ENCODE measurements at regions of chr2 and their contacts with region 1.

Region 1: GRCh38 chr2:176638167-176639015 is 369.1 kb downstream of the MTX2 start:
- DNase-seq: peak; percentile 78
- ATAC-seq: peak; percentile 61
- H3K4me3 ChIP-seq: peak overlapping the region; percentile 71
- H3K27ac ChIP-seq: peak overlapping the region; percentile 76
- H3K4me1 ChIP-seq: peaks cover 41% of the 10 kb centered on the region
- H3K27me3 ChIP-seq: no peaks in the 10 kb centered on the region
- CTCF ChIP-seq: peak; percentile 86

Region 2: DNA sequence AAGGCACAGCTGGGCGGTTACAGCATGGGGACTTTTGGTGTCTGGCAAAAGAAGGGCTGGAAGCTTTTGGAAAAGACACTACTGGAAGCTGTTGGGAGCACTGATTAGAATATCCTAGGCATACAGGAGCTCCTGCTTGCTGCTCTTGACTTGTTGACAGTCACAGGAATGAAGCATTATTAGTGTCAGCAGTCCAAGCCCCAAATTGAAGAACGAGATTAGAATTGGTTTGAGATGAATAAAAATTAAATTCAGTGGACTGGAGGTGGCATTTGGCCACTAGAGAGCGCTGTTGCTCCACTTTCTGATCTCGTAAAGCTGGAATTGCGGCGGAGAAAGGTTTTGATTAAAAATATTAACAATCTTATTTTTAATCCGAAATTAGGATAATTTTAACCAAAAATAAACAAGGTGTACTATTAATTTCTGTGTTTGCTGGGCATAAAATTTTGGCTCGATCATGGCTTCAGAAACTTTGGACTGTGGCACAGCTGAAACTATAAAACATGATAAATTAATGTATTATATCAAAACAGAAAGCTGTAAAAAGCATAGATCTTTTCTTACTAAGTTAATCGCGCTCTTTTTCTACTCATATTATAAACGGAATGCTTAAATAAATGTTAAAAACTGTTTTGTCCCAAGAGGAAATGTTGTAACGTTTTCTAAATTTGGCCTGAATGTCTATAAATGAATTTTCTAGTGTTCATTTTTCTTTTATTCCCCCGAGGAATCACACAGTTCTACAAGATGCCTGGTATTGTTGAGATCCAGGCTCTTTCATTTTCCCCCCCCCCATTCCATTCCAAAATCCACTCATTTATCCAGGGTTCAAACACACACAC is 511.2 kb before region 1 on chr2:
- CTCF ChIA-PET with region 1: interaction called, 3 read pairs
- POLR2A ChIA-PET with region 1: no interaction called
- intact Hi-C with region 1: loop called (anchors 2 kb)
- DNase-seq: peak; percentile 78
- ATAC-seq: 0 out of 2 replicates have a peak, but pooled peaks have one; percentile 14
- H3K4me3 ChIP-seq: peak overlapping the region; percentile 62
- H3K27ac ChIP-seq: no peak overlapping the region
- H3K4me1 ChIP-seq: peaks cover 10% of the 10 kb centered on the region
- H3K27me3 ChIP-seq: no peaks in the 10 kb centered on the region
- CTCF ChIP-seq: peak; percentile 93

Region 3: DNA sequence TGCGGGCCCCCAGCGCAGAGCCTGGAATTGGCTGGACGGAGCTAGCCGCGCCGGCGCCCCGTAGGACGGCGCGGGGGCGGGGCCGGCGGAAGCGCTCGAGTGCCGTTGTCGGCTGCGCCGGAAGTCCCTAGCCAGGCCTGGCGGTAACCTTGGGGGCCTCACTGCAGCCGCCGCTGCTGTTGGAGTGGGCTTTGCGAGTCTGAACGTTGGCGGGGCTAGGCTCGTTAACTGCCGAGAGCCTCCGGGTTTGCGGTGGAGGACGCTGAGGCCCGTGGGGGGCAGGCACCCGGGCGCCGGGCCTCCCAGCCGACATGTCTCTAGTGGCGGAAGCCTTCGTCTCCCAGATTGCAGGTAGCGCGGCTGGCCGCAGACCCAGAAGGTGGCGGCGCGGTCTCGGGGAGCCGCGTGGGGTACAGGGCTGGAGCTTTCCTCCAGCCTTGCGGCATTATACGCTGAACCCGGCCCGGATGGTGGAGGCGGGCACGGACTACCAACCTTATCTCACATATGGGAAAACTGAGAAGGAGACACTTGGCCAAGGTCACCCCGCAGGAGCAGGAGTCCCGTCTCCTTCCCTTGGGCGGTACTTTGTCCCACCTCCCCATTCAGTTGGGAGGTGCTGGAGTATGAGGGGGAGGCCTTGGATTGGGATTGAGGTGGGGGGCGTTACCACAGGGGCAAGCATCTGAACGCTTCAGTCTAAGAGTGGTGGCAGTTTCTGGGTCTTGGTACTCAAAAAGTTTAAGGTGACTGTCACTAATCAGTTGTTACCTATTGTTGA is 368.9 kb before region 1 on chr2 and contains the start of gene MTX2:
- CTCF ChIA-PET with region 1: no interaction called
- POLR2A ChIA-PET with region 1: no interaction called
- intact Hi-C with region 1: loop called (anchors 2 kb)
- DNase-seq: peak; percentile 76
- ATAC-seq: peak; percentile 94
- H3K4me3 ChIP-seq: peak within 1 kb of the TSS; percentile 94
- H3K27ac ChIP-seq: peak within 1 kb of the TSS; percentile 66
- H3K4me1 ChIP-seq: peaks cover 6% of the 10 kb centered on the region; the same call in 1 of the 2 replicates
- H3K27me3 ChIP-seq: no peaks in the 10 kb centered on the region
- CTCF ChIP-seq: no peak
- total RNA-seq, gene MTX2: 33.3 and 54.5 TPM in 2 replicates

Region 4: GRCh38 chr2:176317199-176317598 is 321.2 kb before region 1 on chr2:
- CTCF ChIA-PET with region 1: no interaction called
- POLR2A ChIA-PET with region 1: no interaction called
- intact Hi-C with region 1: no loop called
- DNase-seq: no peak
- ATAC-seq: no peak
- H3K4me3 ChIP-seq: no peak overlapping the region
- H3K27ac ChIP-seq: no peak overlapping the region
- H3K4me1 ChIP-seq: peaks cover 7% of the 10 kb centered on the region; the same call in 1 of the 2 replicates
- H3K27me3 ChIP-seq: no peaks in the 10 kb centered on the region
- CTCF ChIP-seq: no peak

Region 5: DNA sequence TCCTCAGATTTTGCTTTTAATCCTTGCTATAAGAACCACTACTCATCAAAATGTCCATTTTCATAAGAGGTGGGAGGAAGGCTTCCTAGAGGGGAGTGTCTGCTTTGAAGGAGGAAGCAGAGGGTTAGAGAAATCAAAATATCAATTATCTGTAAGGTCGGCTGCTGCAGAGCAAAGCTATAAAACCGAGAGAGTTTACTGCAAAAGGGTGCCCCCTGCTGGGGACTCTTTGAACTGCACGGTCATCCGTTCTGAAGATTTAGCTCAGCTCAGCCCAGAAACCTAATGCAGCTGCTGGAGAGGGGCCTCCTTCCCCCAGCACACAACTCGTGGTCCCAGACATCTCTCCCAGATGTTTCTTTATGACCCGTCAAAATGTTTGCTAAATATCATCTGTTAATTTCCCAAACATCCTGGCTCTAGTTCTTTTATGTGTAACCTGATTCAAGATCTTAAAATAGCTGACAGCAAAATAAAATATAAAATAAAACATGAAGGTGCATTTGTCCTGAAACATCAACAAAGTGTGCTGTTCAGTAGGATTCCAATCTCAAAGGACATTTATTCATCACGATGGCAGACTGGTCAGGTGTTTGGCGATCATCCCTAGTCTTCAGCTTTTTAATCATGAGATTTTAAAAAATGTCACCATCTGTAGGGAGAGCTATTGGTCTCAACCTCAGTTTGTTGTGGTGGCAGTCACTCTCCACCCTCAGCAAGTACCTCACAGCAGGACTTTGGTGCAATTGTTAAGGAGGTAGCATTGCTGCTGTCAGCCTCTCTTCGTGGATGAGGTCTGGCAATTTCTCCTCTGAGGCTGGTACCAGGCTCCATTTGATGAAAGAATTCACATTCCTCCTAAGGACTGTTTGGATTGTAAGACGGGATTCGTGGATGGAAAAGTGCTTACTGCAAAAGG is 183.2 kb before region 1 on chr2:
- CTCF ChIA-PET with region 1: interaction called, 20 read pairs
- POLR2A ChIA-PET with region 1: no interaction called
- intact Hi-C with region 1: loop called (anchors 1 kb)
- DNase-seq: peak; percentile 92
- ATAC-seq: peak; percentile 78
- H3K4me3 ChIP-seq: no peak overlapping the region
- H3K27ac ChIP-seq: no peak overlapping the region
- H3K4me1 ChIP-seq: no peaks in the 10 kb centered on the region
- H3K27me3 ChIP-seq: no peaks in the 10 kb centered on the region
- CTCF ChIP-seq: peak; percentile 92

Region 6: DNA sequence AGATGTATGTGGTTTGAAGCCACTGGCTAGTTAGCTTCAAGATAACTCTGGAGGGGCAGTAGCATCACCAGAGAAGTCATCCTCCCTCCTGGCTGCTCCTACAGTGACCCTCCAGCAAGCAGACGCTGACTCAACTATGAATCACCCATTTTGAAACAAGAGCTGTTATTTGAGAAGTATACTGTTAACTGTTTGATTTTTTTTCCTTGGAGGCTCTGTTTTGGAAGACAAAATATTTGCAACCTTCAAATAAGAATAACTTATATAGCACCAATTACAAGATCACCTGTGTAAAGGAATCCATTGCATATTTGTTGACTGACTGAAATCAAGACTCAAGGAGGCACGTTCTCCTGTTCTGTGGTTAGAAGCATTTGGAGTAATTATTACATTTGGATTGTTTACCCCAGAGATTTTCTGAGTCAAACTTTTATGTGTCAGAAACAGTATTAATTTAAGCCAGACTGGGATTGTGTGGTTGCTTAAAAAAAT is 55.4 kb before region 1 on chr2:
- CTCF ChIA-PET with region 1: no interaction called
- POLR2A ChIA-PET with region 1: interaction called, 4 read pairs
- intact Hi-C with region 1: loop called (anchors 1 kb)
- DNase-seq: peak; percentile 97
- ATAC-seq: peak; percentile 90
- H3K4me3 ChIP-seq: peak overlapping the region; percentile 59
- H3K27ac ChIP-seq: peak overlapping the region; percentile 93
- H3K4me1 ChIP-seq: peaks cover 40% of the 10 kb centered on the region
- H3K27me3 ChIP-seq: no peaks in the 10 kb centered on the region
- CTCF ChIP-seq: no peak

Measured in PC-3 (cell line).